ENCODE measurements at regions of chr15 and their contacts with region 1.

Region 1: DNA sequence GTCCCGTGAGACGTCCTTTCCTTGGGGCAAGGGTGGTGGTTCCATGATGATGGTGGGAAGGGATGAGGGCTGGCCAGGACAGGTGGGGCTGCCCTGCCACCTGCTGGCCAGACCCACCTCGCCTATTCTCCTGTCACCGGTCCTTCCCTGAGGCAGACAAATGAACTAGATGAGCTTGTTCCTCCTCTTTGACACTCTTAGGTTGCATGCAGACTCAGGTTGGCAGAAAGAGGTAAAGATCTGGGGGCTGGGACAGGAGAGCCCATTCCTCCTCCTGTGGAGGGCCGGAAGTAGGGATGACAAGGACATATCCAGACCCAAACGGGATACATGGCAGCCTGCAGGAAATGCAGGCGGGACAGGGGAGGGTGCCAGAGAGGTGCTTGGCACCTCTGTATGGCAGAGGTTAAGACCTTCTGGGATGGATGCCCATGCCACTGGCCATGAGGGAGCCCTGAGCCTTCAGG is 38.6 kb downstream of the ACSBG1 start:
- DNase-seq: peak; percentile 17 to 75 (median 39)
- ATAC-seq: peak; percentile 86
- H3K4me3 ChIP-seq: no peak overlapping the region
- H3K4me3 Mint-ChIP-seq: no peak overlapping the region
- H3K27ac ChIP-seq: no peak overlapping the region
- H3K27ac Mint-ChIP-seq: no peak overlapping the region
- H3K4me1 ChIP-seq: peaks cover 4% of the 10 kb centered on the region
- H3K4me1 Mint-ChIP-seq: no peaks in the 10 kb centered on the region
- H3K27me3 ChIP-seq: no peaks in the 10 kb centered on the region
- H3K27me3 Mint-ChIP-seq: no peaks in the 10 kb centered on the region
- CTCF ChIP-seq: peak; percentile 81

Region 2: DNA sequence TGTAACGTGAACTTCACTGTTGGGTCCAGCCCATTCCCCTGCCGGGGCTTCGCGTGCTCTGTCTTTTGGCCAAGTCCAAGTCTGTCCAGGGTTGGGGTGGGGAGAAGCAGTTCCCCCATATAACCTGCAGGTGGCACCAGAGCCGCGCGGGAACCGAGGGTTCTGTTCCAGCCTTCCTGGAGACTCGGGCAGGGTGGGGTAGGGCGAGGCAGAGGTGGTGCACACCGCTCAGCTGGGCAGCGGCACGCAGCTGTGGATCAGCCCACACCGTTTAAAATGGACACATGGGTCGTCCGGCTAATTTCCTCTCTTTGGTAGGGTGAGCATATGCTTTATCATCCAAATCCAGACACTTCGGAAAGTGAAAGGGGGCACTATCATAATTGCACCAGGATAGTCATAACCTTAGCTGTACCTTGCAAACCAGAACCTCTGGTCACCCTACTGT is 236.3 kb before region 1 on chr15:
- CTCF ChIA-PET with region 1: no interaction called
- POLR2A ChIA-PET with region 1: no interaction called
- intact Hi-C with region 1: loop called (anchors 1 to 2 kb)
- DNase-seq: peak; percentile 52 to 81 (median 68)
- ATAC-seq: peak; percentile 99
- H3K4me3 ChIP-seq: no peak overlapping the region
- H3K4me3 Mint-ChIP-seq: no peak overlapping the region
- H3K27ac ChIP-seq: no peak overlapping the region
- H3K27ac Mint-ChIP-seq: no peak overlapping the region
- H3K4me1 ChIP-seq: peaks cover 6% of the 10 kb centered on the region
- H3K4me1 Mint-ChIP-seq: no peaks in the 10 kb centered on the region
- H3K27me3 ChIP-seq: no peaks in the 10 kb centered on the region
- H3K27me3 Mint-ChIP-seq: no peaks in the 10 kb centered on the region
- CTCF ChIP-seq: peak; percentile 93

Region 3: GRCh38 chr15:78120523-78120922 is 75.2 kb before region 1 on chr15:
- CTCF ChIA-PET with region 1: interaction called, 11 read pairs
- POLR2A ChIA-PET with region 1: no interaction called
- intact Hi-C with region 1: no loop called
- DNase-seq: no peak
- ATAC-seq: no peak
- H3K4me3 ChIP-seq: no peak overlapping the region
- H3K4me3 Mint-ChIP-seq: no peak overlapping the region
- H3K27ac ChIP-seq: no peak overlapping the region
- H3K27ac Mint-ChIP-seq: no peak overlapping the region
- H3K4me1 ChIP-seq: no peaks in the 10 kb centered on the region
- H3K4me1 Mint-ChIP-seq: no peaks in the 10 kb centered on the region
- H3K27me3 ChIP-seq: no peaks in the 10 kb centered on the region
- H3K27me3 Mint-ChIP-seq: no peaks in the 10 kb centered on the region
- CTCF ChIP-seq: no peak

Region 4: DNA sequence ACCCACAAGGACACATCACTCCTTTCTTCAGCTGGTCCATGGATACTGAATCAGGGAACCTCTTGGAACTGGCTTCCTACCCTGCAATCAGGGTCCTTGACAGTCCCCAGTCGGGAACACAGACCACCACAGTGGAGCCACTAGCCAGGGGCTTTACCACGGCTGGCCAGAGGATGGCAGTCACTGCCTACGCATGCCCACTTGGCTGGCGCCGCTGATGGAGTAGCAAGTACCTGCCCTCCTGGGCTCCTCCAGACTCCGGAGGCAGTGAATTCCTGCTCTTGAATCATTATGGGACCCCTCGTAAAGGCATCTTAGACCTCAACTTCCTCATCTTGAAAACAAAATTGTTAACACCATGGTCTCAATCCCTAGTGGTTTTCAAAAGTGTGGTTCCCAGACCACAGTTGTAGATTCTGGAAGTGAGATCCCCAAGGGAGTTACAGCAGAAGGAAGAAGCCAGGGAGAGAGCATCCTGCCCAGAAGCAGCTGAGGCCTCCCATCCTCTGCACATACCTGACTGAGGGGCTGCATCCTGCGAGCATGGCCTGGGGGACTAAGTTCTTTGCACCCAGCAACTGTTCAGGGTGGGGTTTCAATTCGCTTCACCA is 112.8 kb after region 1 on chr15:
- CTCF ChIA-PET with region 1: no interaction called
- POLR2A ChIA-PET with region 1: no interaction called
- intact Hi-C with region 1: no loop called
- DNase-seq: peak in 12 of 14 experiments; percentile 6 to 61 (median 28)
- ATAC-seq: peak; percentile 68
- H3K4me3 ChIP-seq: no peak overlapping the region
- H3K4me3 Mint-ChIP-seq: no peak overlapping the region
- H3K27ac ChIP-seq: no peak overlapping the region
- H3K27ac Mint-ChIP-seq: no peak overlapping the region
- H3K4me1 ChIP-seq: no peaks in the 10 kb centered on the region
- H3K4me1 Mint-ChIP-seq: no peaks in the 10 kb centered on the region
- H3K27me3 ChIP-seq: peaks cover 0 to 9% of the 10 kb centered on the region in 2 experiments
- H3K27me3 Mint-ChIP-seq: peaks cover 13% of the 10 kb centered on the region
- CTCF ChIP-seq: no peak

Measured in CD4-positive, alpha-beta T cell (primary cell).